Activated naive CD4-positive, alpha-beta T cell treated with anti-CD3 and anti-CD28 coated beads for 36 hours (primary cell): ENCODE measurements at regions of chr5 and their contacts with region 1.

Region 1: GRCh38 chr5:54646356-54647101 is 129.0 kb downstream of the SNX18 start:
- DNase-seq: peak; percentile 70
- H3K4me3 Mint-ChIP-seq: peak overlapping the region; percentile 53
- H3K27ac Mint-ChIP-seq: peak overlapping the region; percentile 71
- H3K4me1 Mint-ChIP-seq: peaks cover 51% of the 10 kb centered on the region
- H3K27me3 Mint-ChIP-seq: no peaks in the 10 kb centered on the region

Region 2: GRCh38 chr5:54610197-54610944 is 36.2 kb before region 1 on chr5:
- CTCF ChIA-PET with region 1: no interaction called
- intact Hi-C with region 1: loop called (anchors 2 kb)
- DNase-seq: peak; percentile 20
- H3K4me3 Mint-ChIP-seq: no peak overlapping the region
- H3K27ac Mint-ChIP-seq: no peak overlapping the region
- H3K4me1 Mint-ChIP-seq: peaks cover 19% of the 10 kb centered on the region
- H3K27me3 Mint-ChIP-seq: no peaks in the 10 kb centered on the region

Region 3: GRCh38 chr5:54671111-54671531 is 24.6 kb after region 1 on chr5:
- CTCF ChIA-PET with region 1: no interaction called
- intact Hi-C with region 1: loop called (anchors 1 kb)
- DNase-seq: no peak
- H3K4me3 Mint-ChIP-seq: no peak overlapping the region
- H3K27ac Mint-ChIP-seq: no peak overlapping the region
- H3K4me1 Mint-ChIP-seq: peaks cover 51% of the 10 kb centered on the region
- H3K27me3 Mint-ChIP-seq: no peaks in the 10 kb centered on the region

Region 4: DNA sequence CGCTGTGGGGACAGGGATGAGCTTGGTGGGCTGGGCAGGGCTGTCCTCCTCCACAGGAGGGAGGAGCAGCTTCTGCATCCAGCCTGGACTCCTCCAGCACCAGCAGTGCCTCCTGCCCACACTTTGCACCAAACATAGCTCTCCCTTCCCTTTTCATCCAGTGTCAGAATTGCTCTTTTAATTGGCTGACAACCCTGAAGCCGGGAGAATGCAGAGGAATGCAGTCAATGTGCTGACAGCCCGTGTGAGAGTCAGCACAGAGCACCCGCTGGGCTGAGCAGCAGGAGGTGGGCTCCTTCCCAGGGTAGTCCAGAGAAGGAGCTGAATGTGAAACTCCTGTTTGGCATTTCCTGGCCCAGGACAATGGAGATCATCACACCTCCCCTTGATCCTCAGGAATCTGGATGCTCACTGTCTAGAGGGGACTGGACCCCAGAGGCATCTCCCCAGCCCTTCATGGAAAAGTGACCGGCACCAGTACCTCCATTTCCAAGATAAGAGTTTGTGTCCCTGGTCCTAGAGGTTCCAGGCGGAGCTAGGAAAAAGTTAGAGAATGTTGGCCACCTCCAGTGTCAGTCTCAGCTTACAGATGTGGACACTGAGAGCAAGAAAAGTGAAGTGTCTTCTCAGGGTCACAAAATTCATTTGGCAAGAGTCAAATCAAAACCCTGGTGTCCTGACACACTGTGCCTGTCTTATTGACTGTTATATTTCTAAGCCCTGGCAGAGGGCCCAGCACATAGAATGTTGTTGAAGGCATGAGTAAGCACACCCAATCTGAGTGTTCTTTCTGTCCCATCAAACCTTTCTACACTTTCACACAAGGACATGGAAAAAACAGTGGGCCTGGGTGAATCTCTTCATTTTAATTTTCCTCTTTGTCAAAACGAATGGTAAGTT is 73.1 kb after region 1 on chr5:
- CTCF ChIA-PET with region 1: no interaction called
- intact Hi-C with region 1: loop called (anchors 2 kb)
- DNase-seq: peak; percentile 29
- H3K4me3 Mint-ChIP-seq: no peak overlapping the region
- H3K27ac Mint-ChIP-seq: no peak overlapping the region
- H3K4me1 Mint-ChIP-seq: peaks cover 7% of the 10 kb centered on the region
- H3K27me3 Mint-ChIP-seq: no peaks in the 10 kb centered on the region

Region 5: GRCh38 chr5:54844905-54845566 is 198.5 kb after region 1 on chr5:
- CTCF ChIA-PET with region 1: no interaction called
- intact Hi-C with region 1: loop called (anchors 5 kb)
- DNase-seq: no peak
- H3K4me3 Mint-ChIP-seq: no peak overlapping the region
- H3K27ac Mint-ChIP-seq: no peak overlapping the region
- H3K4me1 Mint-ChIP-seq: peaks cover 3% of the 10 kb centered on the region
- H3K27me3 Mint-ChIP-seq: peaks cover 7% of the 10 kb centered on the region